Activated T-helper 2 cell treated with anti-CD3 and anti-CD28 coated beads, Interferon-gamma antibody, Interleukin-2, Interleukin-4, amounts not matched to agents 10 μg/mL and 5 μg/mL and 100 μg/mL, durations not matched to agents 14 hours and 24 hours and 36 hours (primary cell): ENCODE measurements at regions of chr15 and their contacts with region 1.

Region 1: DNA sequence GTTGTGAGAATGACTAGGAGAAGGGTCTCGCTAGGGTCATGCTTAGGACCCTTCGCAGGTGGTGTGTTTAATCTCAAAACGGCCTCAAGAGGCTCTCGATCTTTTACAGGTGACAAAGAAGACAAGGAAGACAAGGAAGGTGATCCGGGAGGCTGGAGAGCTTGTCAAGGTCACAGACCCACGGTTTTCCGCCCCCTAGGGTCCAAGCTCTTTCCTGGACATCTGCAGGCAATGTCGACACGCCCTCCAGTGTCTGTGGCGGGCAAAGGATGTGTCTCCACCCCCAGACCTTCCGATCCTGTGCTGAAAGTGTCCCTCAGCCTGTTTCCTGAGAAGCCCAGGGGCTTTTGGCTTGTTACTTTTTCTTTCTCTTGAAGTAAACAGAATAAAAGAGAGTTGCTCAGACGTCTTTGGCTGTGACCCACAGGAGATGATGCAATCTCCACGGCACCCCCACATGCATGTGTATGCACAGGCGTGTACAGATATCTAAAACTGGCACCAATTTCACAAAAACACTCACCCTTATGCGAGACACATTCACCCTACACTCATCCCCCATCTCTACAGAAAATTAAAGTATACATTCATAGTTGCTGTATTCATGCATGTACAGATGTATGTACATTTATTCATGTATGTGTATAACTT is 108.8 kb downstream of the KLF13 start:
- DNase-seq: peak; percentile 80
- H3K4me3 Mint-ChIP-seq: peak overlapping the region; percentile 67
- H3K27ac Mint-ChIP-seq: peak overlapping the region; percentile 95
- H3K4me1 Mint-ChIP-seq: peaks cover 75% of the 10 kb centered on the region
- H3K27me3 Mint-ChIP-seq: no peaks in the 10 kb centered on the region

Region 2: GRCh38 chr15:30991255-30992072 is 443.9 kb before region 1 on chr15 and contains the start of gene MTMR10:
- intact Hi-C with region 1: loop called (anchors 2 kb)
- DNase-seq: peak; percentile 75
- H3K4me3 Mint-ChIP-seq: peak within 1 kb of the TSS; percentile 90
- H3K27ac Mint-ChIP-seq: peak within 1 kb of the TSS; percentile 83
- H3K4me1 Mint-ChIP-seq: peaks cover 19% of the 10 kb centered on the region
- H3K27me3 Mint-ChIP-seq: peaks cover 10% of the 10 kb centered on the region
- total RNA-seq, gene MTMR10: 12.2 and 14.1 TPM in 2 replicates

Region 3: DNA sequence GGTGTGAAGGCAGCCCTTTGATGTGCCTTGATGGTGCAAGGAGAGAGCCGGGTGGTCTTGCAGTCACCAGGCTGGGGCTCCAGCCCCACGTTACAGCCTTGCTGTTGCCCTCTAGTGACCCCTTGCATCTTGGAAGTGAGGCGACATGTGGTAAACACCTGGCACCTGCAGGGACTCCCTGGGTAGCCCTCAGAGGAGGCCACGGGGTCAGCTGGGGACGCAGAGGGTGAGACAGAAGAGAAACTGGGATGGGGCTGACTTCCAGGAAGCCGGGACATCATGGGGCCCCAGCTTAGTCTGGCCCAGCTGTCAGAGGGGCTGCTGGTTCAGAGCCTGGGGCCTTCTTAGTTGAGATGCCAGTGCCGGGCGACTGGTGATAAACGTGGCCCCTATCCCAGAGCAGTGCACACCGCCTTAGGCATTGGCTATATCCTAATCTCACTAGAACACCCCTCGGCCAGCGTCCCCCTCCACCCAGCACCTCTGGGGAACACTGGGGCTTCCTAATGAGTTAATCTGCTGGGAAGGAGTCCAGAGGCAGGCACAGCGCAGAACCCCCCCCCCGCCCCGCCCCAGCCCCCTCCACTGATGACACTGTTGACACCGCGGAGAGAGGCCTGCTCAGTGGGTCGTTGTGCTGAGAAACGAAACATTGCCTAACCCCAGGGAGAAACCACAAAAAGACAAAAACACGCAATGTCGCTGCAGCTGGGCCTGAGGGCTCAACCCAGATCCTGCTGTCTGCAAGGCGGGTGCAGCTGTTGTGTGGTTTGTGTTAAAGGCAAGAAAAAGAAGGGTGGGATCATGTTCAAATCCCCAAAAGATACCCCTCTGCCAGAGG is 169.3 kb before region 1 on chr15:
- intact Hi-C with region 1: loop called (anchors 5 kb)
- DNase-seq: peak; percentile 78
- H3K4me3 Mint-ChIP-seq: peak overlapping the region; percentile 35
- H3K27ac Mint-ChIP-seq: peak overlapping the region; percentile 74
- H3K4me1 Mint-ChIP-seq: peaks cover 78% of the 10 kb centered on the region
- H3K27me3 Mint-ChIP-seq: no peaks in the 10 kb centered on the region

Region 4: GRCh38 chr15:31344823-31345605 is 90.4 kb before region 1 on chr15:
- intact Hi-C with region 1: loop called (anchors 1 kb)
- DNase-seq: no peak
- H3K4me3 Mint-ChIP-seq: peak overlapping the region; percentile 82
- H3K27ac Mint-ChIP-seq: peak overlapping the region; percentile 97
- H3K4me1 Mint-ChIP-seq: peaks cover 87% of the 10 kb centered on the region
- H3K27me3 Mint-ChIP-seq: no peaks in the 10 kb centered on the region

Region 5: GRCh38 chr15:31391687-31392671 is 43.4 kb before region 1 on chr15:
- intact Hi-C with region 1: loop called (anchors 2 kb)
- DNase-seq: peak; percentile 77
- H3K4me3 Mint-ChIP-seq: peak overlapping the region; percentile 87
- H3K27ac Mint-ChIP-seq: peak overlapping the region; percentile 82
- H3K4me1 Mint-ChIP-seq: peaks cover 43% of the 10 kb centered on the region
- H3K27me3 Mint-ChIP-seq: no peaks in the 10 kb centered on the region

Region 6: GRCh38 chr15:31452595-31453185 is 17.3 kb after region 1 on chr15:
- intact Hi-C with region 1: no loop called
- DNase-seq: no peak
- H3K4me3 Mint-ChIP-seq: no peak overlapping the region
- H3K27ac Mint-ChIP-seq: no peak overlapping the region
- H3K4me1 Mint-ChIP-seq: peaks cover 17% of the 10 kb centered on the region
- H3K27me3 Mint-ChIP-seq: no peaks in the 10 kb centered on the region

Region 7: DNA sequence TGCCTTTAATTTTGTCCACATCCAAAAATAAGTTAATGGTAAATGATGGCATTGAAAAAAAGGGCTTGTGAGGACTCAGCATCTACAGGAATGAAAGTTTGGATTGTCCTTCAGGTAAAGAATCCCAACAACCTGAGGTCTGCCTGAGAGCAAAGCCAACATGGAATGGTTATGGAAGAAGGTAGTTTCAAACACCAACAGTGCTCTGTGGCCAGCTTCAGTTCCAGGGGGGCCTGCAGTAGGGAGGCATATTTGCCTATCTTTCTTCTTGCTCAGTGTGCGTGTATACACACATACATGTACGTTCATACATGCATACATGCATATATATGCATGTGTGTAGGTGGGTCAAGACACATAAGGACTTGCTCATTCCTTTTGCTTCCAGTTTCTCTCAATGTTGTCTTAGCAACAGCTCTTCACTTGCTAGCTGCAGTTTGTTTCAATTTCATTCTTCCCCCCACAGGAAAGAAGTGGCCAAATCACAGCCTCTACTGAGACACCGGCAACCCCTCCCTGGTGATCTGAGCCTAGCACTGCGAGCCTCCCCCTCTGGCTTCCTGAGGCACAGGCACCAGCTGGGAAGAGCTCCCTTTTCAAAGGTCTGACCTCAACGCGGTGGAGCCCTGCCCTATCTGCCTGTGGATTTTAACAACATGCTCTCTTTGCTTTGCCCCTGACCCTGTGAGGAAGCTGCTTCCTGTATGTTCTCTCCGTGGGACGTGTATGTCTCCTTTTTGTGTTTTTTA is 37.4 kb after region 1 on chr15:
- intact Hi-C with region 1: loop called (anchors 1 kb)
- DNase-seq: peak; percentile 69
- H3K4me3 Mint-ChIP-seq: peak overlapping the region; percentile 66
- H3K27ac Mint-ChIP-seq: peak overlapping the region; percentile 90
- H3K4me1 Mint-ChIP-seq: peaks cover 39% of the 10 kb centered on the region
- H3K27me3 Mint-ChIP-seq: no peaks in the 10 kb centered on the region

Region 8: GRCh38 chr15:31511707-31512310 is 76.4 kb after region 1 on chr15:
- intact Hi-C with region 1: loop called (anchors 1 kb)
- DNase-seq: peak; percentile 19
- H3K4me3 Mint-ChIP-seq: no peak overlapping the region
- H3K27ac Mint-ChIP-seq: peak overlapping the region; percentile 24
- H3K4me1 Mint-ChIP-seq: peaks cover 22% of the 10 kb centered on the region
- H3K27me3 Mint-ChIP-seq: peaks cover 3% of the 10 kb centered on the region